GM12878 (cell line): ENCODE measurements at regions of chr3 and their contacts with region 1.

Region 1: DNA sequence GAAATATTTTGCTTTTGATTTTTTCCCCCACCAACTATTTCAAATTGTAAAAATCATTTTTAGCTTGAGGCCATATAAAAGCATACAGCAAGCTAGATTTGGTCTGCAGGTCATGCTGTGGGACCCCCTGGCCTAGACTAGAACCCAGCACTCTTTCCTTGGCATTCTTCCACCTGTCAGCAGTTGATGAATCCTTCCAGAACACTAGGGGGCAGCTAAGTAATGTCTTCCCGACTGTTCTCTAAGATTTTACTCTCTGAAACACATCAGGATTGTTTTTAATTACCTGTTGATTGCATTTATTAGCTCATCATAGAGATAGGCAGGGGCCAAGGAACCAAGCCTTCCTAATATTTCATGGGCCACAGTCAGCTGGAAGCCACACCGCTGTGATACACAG is 174.5 kb downstream of the CACNA1D start:
- DNase-seq: no peak
- ATAC-seq: peak; percentile 38; the same call in 2 of the 3 replicates
- H3K4me3 ChIP-seq: no peak overlapping the region
- H3K27ac ChIP-seq: no peak overlapping the region
- H3K4me1 ChIP-seq: no peaks in the 10 kb centered on the region
- H3K27me3 ChIP-seq: peaks cover 0 to 4% of the 10 kb centered on the region in 2 experiments; a peak in 2 of 4 replicates
- CTCF ChIP-seq: peak; percentile 35 to 44 (median 39); a peak in 4 of 6 replicates
- EP300 ChIP-seq: no peak
- POLR2A ChIP-seq: no peak
- RAD21 ChIP-seq: peak; percentile 52; the same call in 1 of the 2 replicates

Region 2: DNA sequence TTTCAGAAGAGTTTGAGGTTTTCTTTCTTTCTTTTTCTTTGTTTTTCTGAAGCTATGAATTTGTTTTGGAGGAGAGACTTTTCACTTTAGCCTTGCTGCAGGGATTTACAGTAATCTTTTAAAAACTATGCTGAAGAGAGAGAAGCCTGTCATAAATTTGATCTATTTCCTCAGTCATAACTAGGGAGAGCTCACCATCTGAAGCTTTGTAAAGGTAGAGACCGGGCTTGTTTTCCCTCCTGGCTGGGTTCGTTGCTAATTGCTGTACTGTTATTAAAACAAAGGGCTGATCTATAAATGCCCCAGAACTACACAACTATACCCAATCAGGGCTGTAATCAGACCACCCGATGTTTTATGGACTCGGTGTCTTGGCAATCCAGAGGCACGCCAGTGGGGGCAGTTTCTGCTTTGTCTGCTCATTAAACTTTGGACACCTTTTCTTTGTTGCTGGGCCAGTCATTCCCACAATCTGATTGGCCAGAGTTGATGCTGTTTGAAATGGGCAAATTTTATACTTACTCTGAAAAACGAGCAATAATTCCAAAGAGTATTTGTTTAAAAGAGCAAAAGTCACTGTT is 10.2 kb before region 1 on chr3:
- CTCF ChIA-PET with region 1: interaction called, 10 read pairs
- POLR2A ChIA-PET with region 1: interaction called, 3 read pairs
- RAD21 ChIA-PET with region 1: no interaction called
- SMC1A ChIA-PET with region 1: interaction called, 6 read pairs
- in situ Hi-C with region 1: no loop called
- intact Hi-C with region 1: no loop called
- DNase-seq: no peak
- ATAC-seq: no peak
- H3K4me3 ChIP-seq: no peak overlapping the region
- H3K27ac ChIP-seq: no peak overlapping the region
- H3K4me1 ChIP-seq: no peaks in the 10 kb centered on the region
- H3K27me3 ChIP-seq: no peaks in the 10 kb centered on the region
- CTCF ChIP-seq: no peak
- EP300 ChIP-seq: no peak
- POLR2A ChIP-seq: no peak
- RAD21 ChIP-seq: no peak